IMR-90 (cell line): ENCODE measurements at regions of chr2 and their contacts with region 1.

Region 1: GRCh38 chr2:102615622-102616436 is 3.5 kb upstream of the SLC9A2 start:
- DNase-seq: peak; percentile 57
- ATAC-seq: peak; percentile 99
- H3K4me3 ChIP-seq: no peak overlapping the region
- H3K27ac ChIP-seq: no peak overlapping the region
- H3K4me1 ChIP-seq: no peaks in the 10 kb centered on the region; the same call in 1 of the 2 replicates
- H3K27me3 ChIP-seq: peaks cover 29% of the 10 kb centered on the region
- CTCF ChIP-seq: peak; percentile 91
- POLR2A ChIP-seq: no peak
- RAD21 ChIP-seq: peak; percentile 90

Region 2: DNA sequence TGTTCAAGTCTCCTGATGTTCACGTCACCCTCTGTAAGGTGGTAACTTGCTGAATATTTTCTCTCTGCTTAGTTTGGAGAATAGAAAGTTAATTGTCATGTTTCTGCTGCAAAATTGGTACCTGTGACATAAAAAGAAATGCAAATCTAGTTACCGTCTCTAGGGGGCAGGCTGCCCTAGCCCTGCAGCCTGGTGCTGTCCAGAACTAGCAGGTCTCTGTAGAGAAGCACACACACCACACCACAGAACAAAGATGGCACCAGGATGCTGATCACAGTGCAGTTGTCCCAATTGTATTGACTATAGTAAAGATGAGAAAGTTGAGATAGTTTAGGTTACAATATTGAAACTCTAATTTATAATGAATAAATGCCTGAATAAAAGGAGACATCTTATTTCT is 95.8 kb before region 1 on chr2:
- CTCF ChIA-PET with region 1: no interaction called
- POLR2A ChIA-PET with region 1: no interaction called
- dilution Hi-C with region 1: no loop called
- in situ Hi-C with region 1: no loop called
- intact Hi-C with region 1: loop called (anchors 5 kb)
- DNase-seq: peak; percentile 17
- ATAC-seq: peak; percentile 68
- H3K4me3 ChIP-seq: no peak overlapping the region
- H3K27ac ChIP-seq: no peak overlapping the region
- H3K4me1 ChIP-seq: no peaks in the 10 kb centered on the region
- H3K27me3 ChIP-seq: peaks cover 6% of the 10 kb centered on the region
- CTCF ChIP-seq: peak; percentile 36
- POLR2A ChIP-seq: no peak
- RAD21 ChIP-seq: peak; percentile 49

Region 3: GRCh38 chr2:102592597-102592996 is 23.2 kb before region 1 on chr2:
- CTCF ChIA-PET with region 1: interaction called, 10 read pairs
- POLR2A ChIA-PET with region 1: no interaction called
- dilution Hi-C with region 1: no loop called
- in situ Hi-C with region 1: no loop called
- intact Hi-C with region 1: no loop called
- DNase-seq: peak; percentile 8
- ATAC-seq: no peak
- H3K4me3 ChIP-seq: no peak overlapping the region
- H3K27ac ChIP-seq: no peak overlapping the region
- H3K4me1 ChIP-seq: no peaks in the 10 kb centered on the region
- H3K27me3 ChIP-seq: peaks cover 2% of the 10 kb centered on the region; the same call in 1 of the 2 replicates
- CTCF ChIP-seq: peak; percentile 60
- POLR2A ChIP-seq: no peak
- RAD21 ChIP-seq: peak; percentile 64

Region 4: DNA sequence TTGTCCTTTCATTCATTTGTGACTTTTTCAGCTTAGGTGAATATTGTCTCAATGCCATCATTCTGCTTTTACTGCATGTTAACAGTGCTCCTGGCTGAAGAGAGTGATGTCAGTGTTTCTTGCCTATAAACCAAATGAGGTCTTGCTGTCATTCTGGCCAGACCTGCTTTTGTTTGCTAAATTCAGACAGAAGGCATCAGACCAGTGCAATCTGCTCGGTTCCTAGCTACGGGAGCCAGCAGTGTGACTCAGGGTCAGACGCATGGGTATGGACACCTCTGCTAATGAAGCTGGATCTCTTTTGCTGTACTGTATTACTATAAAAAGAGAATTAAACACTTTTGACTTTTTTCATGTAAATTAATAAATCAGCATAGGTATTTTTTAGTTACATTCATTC is 324.9 kb after region 1 on chr2:
- CTCF ChIA-PET with region 1: no interaction called
- POLR2A ChIA-PET with region 1: no interaction called
- dilution Hi-C with region 1: no loop called
- in situ Hi-C with region 1: no loop called
- intact Hi-C with region 1: no loop called
- DNase-seq: no peak
- ATAC-seq: no peak
- H3K4me3 ChIP-seq: no peak overlapping the region
- H3K27ac ChIP-seq: no peak overlapping the region
- H3K4me1 ChIP-seq: no peaks in the 10 kb centered on the region
- H3K27me3 ChIP-seq: no peaks in the 10 kb centered on the region
- CTCF ChIP-seq: no peak
- POLR2A ChIP-seq: no peak
- RAD21 ChIP-seq: no peak